Esophagus muscularis mucosa (tissue), 4 donors: ENCODE measurements at regions of chr11 and their contacts with region 1.

Region 1: GRCh38 chr11:123122341-123122740 is 60.4 kb upstream of the HSPA8 start:
- DNase-seq: peak; percentile 92
- H3K4me3 ChIP-seq: no peak overlapping the region
- H3K27ac ChIP-seq: peak overlapping the region; percentile 73 to 82 (median 78)
- H3K4me1 ChIP-seq: peaks cover 5 to 48% (median 42%) of the 10 kb centered on the region in 4 donors
- H3K27me3 ChIP-seq: no peaks in the 10 kb centered on the region
- CTCF ChIP-seq: no peak
- EP300 ChIP-seq: peak; percentile 16
- POLR2A ChIP-seq: no peak

Region 2: GRCh38 chr11:123072332-123072761 is 50.0 kb before region 1 on chr11:
- intact Hi-C with region 1: no loop called
- DNase-seq: no peak
- H3K4me3 ChIP-seq: no peak overlapping the region
- H3K27ac ChIP-seq: peak overlapping the region in 2 of 4 donors; percentile 13 to 68
- H3K4me1 ChIP-seq: peaks cover 4 to 48% (median 39%) of the 10 kb centered on the region in 4 donors
- H3K27me3 ChIP-seq: no peaks in the 10 kb centered on the region
- CTCF ChIP-seq: no peak
- EP300 ChIP-seq: no peak
- POLR2A ChIP-seq: no peak

Region 3: GRCh38 chr11:123166071-123166559 is 43.8 kb after region 1 on chr11:
- intact Hi-C with region 1: loop called (anchors 5 kb)
- DNase-seq: no peak
- H3K4me3 ChIP-seq: no peak overlapping the region
- H3K27ac ChIP-seq: peak overlapping the region; percentile 73 to 83 (median 78)
- H3K4me1 ChIP-seq: peaks cover 0 to 97% (median 84%) of the 10 kb centered on the region in 4 donors
- H3K27me3 ChIP-seq: no peaks in the 10 kb centered on the region
- CTCF ChIP-seq: peak; percentile 49 to 59 (median 57)
- EP300 ChIP-seq: no peak
- POLR2A ChIP-seq: no peak